ENCODE measurements at regions of chr5 and their contacts with region 1.

Region 1: GRCh38 chr5:39080597-39081204 is 6.5 kb upstream of the RICTOR start:
- DNase-seq: peak in 1 of 2 donors; percentile 64
- ATAC-seq: peak; percentile 89
- H3K4me3 ChIP-seq: no peak overlapping the region
- H3K27ac ChIP-seq: no peak overlapping the region
- H3K4me1 ChIP-seq: no peaks in the 10 kb centered on the region
- H3K27me3 ChIP-seq: no peaks in the 10 kb centered on the region

Region 2: DNA sequence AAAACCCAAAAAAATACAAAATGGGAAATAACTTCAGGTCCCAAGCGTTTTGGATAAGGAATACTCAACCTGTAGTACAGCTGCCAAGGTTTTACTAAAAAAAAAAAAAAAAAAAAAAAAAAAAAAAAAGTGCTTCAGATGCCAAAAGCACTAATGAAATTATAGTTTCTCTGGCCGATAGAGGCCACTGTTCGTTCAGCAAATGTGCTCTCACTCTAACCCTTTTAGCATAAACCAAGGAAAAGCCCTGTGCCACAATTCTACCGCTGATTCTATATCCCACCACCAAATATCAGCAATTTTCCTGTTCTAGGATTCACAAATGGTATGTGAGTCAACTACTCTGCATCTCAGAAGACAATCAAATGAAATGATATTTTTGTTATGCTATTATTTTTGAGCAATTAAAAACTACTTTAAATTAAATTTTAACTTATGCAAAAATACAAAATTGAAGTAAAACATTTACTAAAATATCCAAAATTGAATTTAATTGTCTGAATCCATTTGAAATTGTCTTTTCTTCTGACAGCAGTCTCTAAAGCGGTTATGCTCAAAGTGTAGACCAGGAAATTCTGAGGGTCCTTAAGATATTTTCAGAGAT is 86.3 kb before region 1 on chr5:
- intact Hi-C with region 1: loop called in 1 of 2 experiments (anchors 5 kb)
- DNase-seq: no peak
- ATAC-seq: peak; percentile 57
- H3K4me3 ChIP-seq: no peak overlapping the region
- H3K27ac ChIP-seq: no peak overlapping the region
- H3K4me1 ChIP-seq: no peaks in the 10 kb centered on the region
- H3K27me3 ChIP-seq: no peaks in the 10 kb centered on the region

Region 3: DNA sequence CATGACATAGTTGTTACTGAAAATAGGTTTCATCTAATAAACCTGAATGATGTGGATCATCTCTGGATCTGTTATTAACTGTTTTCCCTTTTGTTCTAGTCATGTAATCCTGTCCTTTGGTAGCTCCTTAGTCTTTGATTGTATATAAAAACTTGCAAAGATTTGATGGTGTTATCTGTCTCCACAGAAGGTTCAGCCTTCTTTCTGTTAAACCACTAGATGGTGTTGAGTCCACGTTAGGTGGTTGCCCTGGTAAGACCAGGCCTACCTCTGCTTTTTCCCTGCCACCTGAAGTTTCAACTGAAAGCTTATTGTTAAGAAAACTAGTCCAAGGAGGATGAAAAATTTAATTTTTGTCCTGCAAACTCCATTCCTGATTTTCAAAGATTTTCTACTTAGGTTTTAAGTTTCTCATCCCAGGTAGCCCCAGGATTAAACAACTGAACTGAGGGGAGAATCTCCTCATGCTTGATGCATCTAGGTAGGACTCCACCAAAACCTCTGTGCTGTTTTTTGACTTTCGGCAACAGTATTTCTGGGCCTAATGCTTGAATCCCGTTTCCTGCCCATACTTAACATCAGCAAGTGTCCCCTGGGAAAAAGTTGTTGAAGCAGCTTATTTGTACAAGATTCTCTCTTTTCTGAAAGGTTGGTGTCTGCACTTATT is 75.0 kb before region 1 on chr5:
- intact Hi-C with region 1: loop called (anchors 5 kb)
- DNase-seq: no peak
- ATAC-seq: no peak
- H3K4me3 ChIP-seq: no peak overlapping the region
- H3K27ac ChIP-seq: no peak overlapping the region
- H3K4me1 ChIP-seq: no peaks in the 10 kb centered on the region
- H3K27me3 ChIP-seq: no peaks in the 10 kb centered on the region